Panc1 (cell line): ENCODE measurements at regions of chr5 and their contacts with region 1.

Region 1: GRCh38 chr5:40853632-40854192 is 12.5 kb downstream of the CARD6 start:
- DNase-seq: no peak
- ATAC-seq: no peak
- H3K4me3 ChIP-seq: no peak overlapping the region
- H3K27ac ChIP-seq: no peak overlapping the region
- H3K4me1 ChIP-seq: no peaks in the 10 kb centered on the region
- H3K27me3 ChIP-seq: no peaks in the 10 kb centered on the region
- CTCF ChIP-seq: no peak

Region 2: GRCh38 chr5:40841068-40841805 is 12.5 kb before region 1 on chr5 and contains the start of gene CARD6:
- CTCF ChIA-PET with region 1: no interaction called
- POLR2A ChIA-PET with region 1: no interaction called
- in situ Hi-C with region 1: no loop called
- intact Hi-C with region 1: loop called (anchors 1 kb)
- DNase-seq: no peak
- ATAC-seq: peak; percentile 52; the same call in 1 of the 2 replicates
- H3K4me3 ChIP-seq: peak within 1 kb of the TSS; percentile 25 to 56
- H3K27ac ChIP-seq: peak within 1 kb of the TSS; percentile 72
- H3K4me1 ChIP-seq: 0 out of 2 replicates have a peak, but pooled peaks cover 6% of the 10 kb centered on the region
- H3K27me3 ChIP-seq: 0 out of 2 replicates have a peak, but pooled peaks cover 6% of the 10 kb centered on the region
- CTCF ChIP-seq: no peak
- total RNA-seq, gene CARD6: 0.49 TPM

Region 3: DNA sequence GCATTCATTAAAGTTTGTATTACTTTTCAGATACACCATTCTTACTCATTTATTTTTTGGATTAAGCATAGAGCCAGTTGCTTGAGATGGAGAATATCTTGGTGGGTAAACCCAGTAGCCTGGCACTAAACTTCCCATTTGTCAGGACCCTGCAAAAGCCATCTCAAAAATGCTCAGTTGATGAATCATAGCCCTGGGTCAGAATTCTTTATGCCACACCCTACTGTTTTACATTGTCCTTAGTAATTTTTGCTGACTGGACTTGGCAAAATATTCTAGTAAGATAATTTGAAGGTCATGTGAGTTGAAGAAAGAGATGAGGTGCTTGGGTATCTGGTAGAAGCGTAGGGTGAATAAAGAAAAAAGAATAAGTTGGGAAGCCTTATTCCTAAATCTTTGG is 106.3 kb after region 1 on chr5:
- CTCF ChIA-PET with region 1: no interaction called
- POLR2A ChIA-PET with region 1: no interaction called
- in situ Hi-C with region 1: no loop called
- intact Hi-C with region 1: no loop called
- DNase-seq: no peak
- ATAC-seq: no peak
- H3K4me3 ChIP-seq: no peak overlapping the region
- H3K27ac ChIP-seq: no peak overlapping the region
- H3K4me1 ChIP-seq: no peaks in the 10 kb centered on the region
- H3K27me3 ChIP-seq: no peaks in the 10 kb centered on the region
- CTCF ChIP-seq: no peak